GM12878 (cell line): ENCODE measurements at regions of chr16 and their contacts with region 1.

Region 1: DNA sequence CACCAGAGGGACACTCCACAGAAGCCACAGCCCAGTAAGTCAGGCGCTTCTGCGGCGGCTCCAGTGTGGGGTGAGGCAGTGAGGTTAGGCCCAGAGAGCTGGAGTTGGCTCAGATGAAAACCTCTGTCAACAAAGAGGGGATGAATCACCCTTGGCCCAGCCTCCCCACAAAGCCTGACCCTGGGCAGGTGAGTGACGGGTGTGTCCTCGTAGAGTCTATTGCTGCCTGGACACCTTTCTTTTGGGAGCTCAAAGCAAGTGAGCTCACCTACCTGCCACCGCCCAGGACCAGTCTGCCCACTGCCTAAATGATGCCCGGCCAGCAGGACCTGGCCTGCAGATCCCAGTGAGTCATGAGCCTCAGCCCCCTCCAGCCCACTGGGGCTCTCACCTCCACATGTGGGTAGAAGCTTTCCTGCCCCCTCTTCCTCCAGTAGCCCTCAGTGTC is 24.9 kb upstream of the DBNDD1 start:
- DNase-seq: no peak
- ATAC-seq: no peak
- H3K4me3 ChIP-seq: no peak overlapping the region
- H3K27ac ChIP-seq: no peak overlapping the region
- H3K4me1 ChIP-seq: no peaks in the 10 kb centered on the region
- H3K27me3 ChIP-seq: peaks cover 0 to 3% of the 10 kb centered on the region in 2 experiments; a peak in 1 of 4 replicates
- CTCF ChIP-seq: no peak
- EP300 ChIP-seq: no peak
- POLR2A ChIP-seq: no peak
- RAD21 ChIP-seq: no peak

Region 2: GRCh38 chr16:90077226-90077756 is 33.2 kb after region 1 on chr16 and contains the start of gene PRDM7:
- CTCF ChIA-PET with region 1: no interaction called
- POLR2A ChIA-PET with region 1: no interaction called
- RAD21 ChIA-PET with region 1: no interaction called
- SMC1A ChIA-PET with region 1: no interaction called
- in situ Hi-C with region 1: loop called (anchors 5 kb)
- intact Hi-C with region 1: no loop called
- DNase-seq: peak; percentile 79
- ATAC-seq: peak; percentile 97
- H3K4me3 ChIP-seq: peak within 1 kb of the TSS; percentile 54; the same call in 1 of the 2 replicates
- H3K27ac ChIP-seq: no peak within 1 kb of the TSS
- H3K4me1 ChIP-seq: peaks cover 5% of the 10 kb centered on the region
- H3K27me3 ChIP-seq: no peaks in the 10 kb centered on the region; a peak in 1 of 4 replicates
- CTCF ChIP-seq: no peak
- EP300 ChIP-seq: no peak
- POLR2A ChIP-seq: no peak
- RAD21 ChIP-seq: no peak
- polyA plus RNA-seq, gene PRDM7: not detected